ENCODE measurements at regions of chr2 and their contacts with region 1.

Region 1: GRCh38 chr2:45650851-45651414 is 542 bp upstream of the PRKCE start:
- DNase-seq: peak; percentile 94
- H3K4me3 Mint-ChIP-seq: peak overlapping the region; percentile 93
- H3K27ac Mint-ChIP-seq: peak overlapping the region; percentile 94
- H3K4me1 Mint-ChIP-seq: peaks cover 29% of the 10 kb centered on the region
- H3K27me3 Mint-ChIP-seq: peaks cover 3% of the 10 kb centered on the region

Region 2: DNA sequence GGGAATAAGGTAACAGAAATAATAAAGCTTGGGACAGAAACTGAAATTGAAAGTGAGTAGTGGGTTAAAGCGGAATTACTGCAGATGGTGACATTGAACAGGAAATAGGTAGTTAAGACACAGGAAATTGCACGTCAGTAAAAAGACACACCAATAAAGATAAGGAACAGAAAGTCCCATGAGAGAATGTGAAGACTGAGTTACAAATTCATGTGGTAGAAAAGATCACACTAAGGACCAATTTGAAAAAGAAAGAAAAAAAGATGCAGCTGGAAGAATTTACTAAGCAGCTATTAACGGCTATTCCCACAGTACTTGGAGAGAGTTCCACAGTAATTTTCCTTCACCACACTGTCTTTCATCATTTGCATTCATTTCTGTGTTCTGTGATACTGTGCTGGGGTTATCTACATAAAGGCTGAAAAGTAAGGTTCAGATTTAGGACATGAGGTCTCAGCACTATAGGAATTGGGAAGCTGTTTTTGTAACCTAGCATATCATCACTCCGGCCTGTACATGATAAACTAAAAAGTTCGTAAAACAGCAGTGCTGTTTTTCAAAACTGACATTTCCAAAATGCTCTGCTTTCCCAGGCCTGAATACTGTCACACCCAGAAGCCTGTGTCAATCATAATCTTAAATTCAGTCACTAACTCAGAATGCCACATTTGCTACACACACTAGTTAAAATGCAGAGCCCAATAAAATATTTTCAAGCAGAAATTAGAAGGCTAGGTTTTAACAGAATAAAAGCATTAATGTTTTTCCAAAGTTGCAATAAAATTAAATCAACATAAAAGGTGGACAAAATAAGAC is 82.8 kb before region 1 on chr2:
- CTCF ChIA-PET with region 1: no interaction called
- POLR2A ChIA-PET with region 1: interaction called, 11 read pairs
- DNase-seq: no peak
- H3K4me3 Mint-ChIP-seq: peak overlapping the region; percentile 79
- H3K27ac Mint-ChIP-seq: peak overlapping the region; percentile 89
- H3K4me1 Mint-ChIP-seq: peaks cover 27% of the 10 kb centered on the region
- H3K27me3 Mint-ChIP-seq: no peaks in the 10 kb centered on the region

Region 3: GRCh38 chr2:45637440-45637839 is 13.5 kb before region 1 on chr2:
- CTCF ChIA-PET with region 1: interaction called, 3 read pairs
- POLR2A ChIA-PET with region 1: interaction called, 19 read pairs
- DNase-seq: peak; percentile 37
- H3K4me3 Mint-ChIP-seq: no peak overlapping the region
- H3K27ac Mint-ChIP-seq: no peak overlapping the region
- H3K4me1 Mint-ChIP-seq: peaks cover 19% of the 10 kb centered on the region
- H3K27me3 Mint-ChIP-seq: peaks cover 59% of the 10 kb centered on the region

Region 4: GRCh38 chr2:45681675-45682074 is 30.7 kb after region 1 on chr2:
- CTCF ChIA-PET with region 1: no interaction called
- POLR2A ChIA-PET with region 1: no interaction called
- DNase-seq: peak; percentile 17
- H3K4me3 Mint-ChIP-seq: no peak overlapping the region
- H3K27ac Mint-ChIP-seq: no peak overlapping the region
- H3K4me1 Mint-ChIP-seq: peaks cover 13% of the 10 kb centered on the region
- H3K27me3 Mint-ChIP-seq: no peaks in the 10 kb centered on the region

Measured in activated CD4-positive, alpha-beta memory T cell treated with anti-CD3 and anti-CD28 coated beads, Interleukin-2, amount 10 ng/mL, durations not matched to agents 7 days and 5 days (primary cell).